ENCODE measurements at regions of chr6 and their contacts with region 1.

Region 1: GRCh38 chr6:129709769-129710449 is at the start of gene ARHGAP18:
- DNase-seq: peak; percentile 69
- H3K4me3 Mint-ChIP-seq: peak within 1 kb of the TSS; percentile 96
- H3K27ac Mint-ChIP-seq: peak within 1 kb of the TSS; percentile 79
- H3K4me1 Mint-ChIP-seq: peaks cover 55% of the 10 kb centered on the region
- H3K27me3 Mint-ChIP-seq: no peaks in the 10 kb centered on the region
- total RNA-seq, gene ARHGAP18: 3.8 and 5.0 TPM in 2 replicates

Region 2: GRCh38 chr6:129621247-129621646 is 88.7 kb before region 1 on chr6:
- intact Hi-C with region 1: no loop called
- DNase-seq: no peak
- H3K4me3 Mint-ChIP-seq: no peak overlapping the region
- H3K27ac Mint-ChIP-seq: no peak overlapping the region
- H3K4me1 Mint-ChIP-seq: no peaks in the 10 kb centered on the region
- H3K27me3 Mint-ChIP-seq: no peaks in the 10 kb centered on the region

Region 3: DNA sequence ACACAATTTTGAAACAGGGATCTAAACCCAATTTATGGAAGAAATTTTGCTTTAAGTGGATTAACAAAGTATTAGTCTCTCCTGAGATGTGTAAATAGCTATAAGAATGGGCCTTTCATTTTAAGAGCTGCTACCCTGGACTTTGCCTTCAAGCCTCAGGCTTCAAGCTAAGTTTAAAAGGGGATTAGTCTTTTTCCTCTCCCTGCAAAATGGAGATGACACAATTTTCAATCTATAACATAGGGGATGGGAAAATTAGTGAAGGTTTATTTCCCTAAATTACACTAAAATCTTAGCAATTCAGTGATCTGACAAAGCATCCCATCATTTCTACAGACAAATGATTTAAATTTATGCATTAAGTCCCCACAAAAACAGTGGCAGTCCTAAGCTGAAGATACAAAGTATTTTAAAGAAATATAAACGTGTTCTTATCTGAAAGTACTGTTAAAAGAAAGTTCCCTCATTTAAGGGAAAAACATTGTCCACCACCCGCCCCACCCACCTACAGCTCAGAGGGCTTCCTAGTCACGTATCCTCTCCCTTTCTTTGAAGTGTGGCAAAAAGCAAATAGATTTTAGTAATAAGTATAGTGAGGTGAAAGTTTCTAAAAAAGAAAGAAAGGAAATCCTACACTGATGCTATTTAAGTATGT is 14.4 kb before region 1 on chr6:
- intact Hi-C with region 1: loop called (anchors 1 kb)
- DNase-seq: no peak
- H3K4me3 Mint-ChIP-seq: peak overlapping the region; percentile 13
- H3K27ac Mint-ChIP-seq: no peak overlapping the region
- H3K4me1 Mint-ChIP-seq: peaks cover 74% of the 10 kb centered on the region
- H3K27me3 Mint-ChIP-seq: peaks cover 2% of the 10 kb centered on the region

Region 4: GRCh38 chr6:130466052-130467048 is 756.4 kb after region 1 on chr6:
- intact Hi-C with region 1: no loop called
- DNase-seq: no peak
- H3K4me3 Mint-ChIP-seq: no peak overlapping the region
- H3K27ac Mint-ChIP-seq: no peak overlapping the region
- H3K4me1 Mint-ChIP-seq: peaks cover 20% of the 10 kb centered on the region
- H3K27me3 Mint-ChIP-seq: peaks cover 4% of the 10 kb centered on the region